Adrenal gland (tissue), 19 donors: ENCODE measurements at regions of chr18 and their contacts with region 1.

Region 1: GRCh38 chr18:32552421-32553030 is 81.8 kb upstream of the GAREM1 start:
- DNase-seq: peak; percentile 60 to 82 (median 73)
- H3K4me3 ChIP-seq: no peak overlapping the region
- H3K27ac ChIP-seq: no peak overlapping the region
- H3K4me1 ChIP-seq: no peaks in the 10 kb centered on the region
- H3K27me3 ChIP-seq: no peaks in the 10 kb centered on the region
- CTCF ChIP-seq: peak; percentile 78 to 91 (median 83)
- POLR2A ChIP-seq: no peak

Region 2: DNA sequence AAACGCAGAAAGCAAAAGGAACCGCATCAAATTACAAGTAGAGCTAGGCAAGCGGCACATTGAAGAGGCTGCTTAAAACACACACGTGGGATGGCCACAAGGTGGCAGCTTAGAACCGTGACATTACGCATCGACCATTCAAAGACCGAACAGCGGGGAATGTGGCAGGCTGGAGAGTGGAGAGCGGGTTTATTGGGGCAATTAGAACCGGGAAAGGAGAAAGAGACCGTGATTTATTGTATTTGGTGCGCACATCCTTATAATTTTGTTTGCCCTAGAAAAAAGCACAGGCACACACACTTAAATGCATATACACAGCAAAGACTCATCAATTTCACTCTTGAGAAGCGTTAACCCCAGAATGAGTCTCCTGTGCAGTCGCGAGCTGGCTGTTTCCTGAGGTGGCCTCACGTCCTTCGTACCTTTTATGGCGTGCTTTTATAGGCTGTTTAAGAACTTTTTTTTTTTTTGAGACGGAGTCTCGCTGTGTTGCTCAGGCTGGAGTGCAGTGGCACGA is 394.4 kb before region 1 on chr18:
- intact Hi-C with region 1: loop called (anchors 2 to 5 kb)
- DNase-seq: peak; percentile 79 to 92 (median 86)
- H3K4me3 ChIP-seq: no peak overlapping the region
- H3K27ac ChIP-seq: no peak overlapping the region
- H3K4me1 ChIP-seq: peaks cover 0 to 7% of the 10 kb centered on the region in 2 donors
- H3K27me3 ChIP-seq: no peaks in the 10 kb centered on the region
- CTCF ChIP-seq: peak; percentile 71 to 96 (median 90)
- POLR2A ChIP-seq: no peak

Region 3: GRCh38 chr18:32261003-32261402 is 291.5 kb before region 1 on chr18:
- intact Hi-C with region 1: loop called (anchors 5 to 10 kb)
- DNase-seq: no peak
- H3K4me3 ChIP-seq: no peak overlapping the region
- H3K27ac ChIP-seq: no peak overlapping the region
- H3K4me1 ChIP-seq: no peaks in the 10 kb centered on the region
- H3K27me3 ChIP-seq: no peaks in the 10 kb centered on the region
- CTCF ChIP-seq: no peak
- POLR2A ChIP-seq: no peak

Region 4: GRCh38 chr18:32271672-32272208 is 280.8 kb before region 1 on chr18:
- intact Hi-C with region 1: loop called (anchors 5 to 10 kb)
- DNase-seq: peak in 4 of 7 donors; percentile 15 to 48 (median 36)
- H3K4me3 ChIP-seq: no peak overlapping the region
- H3K27ac ChIP-seq: no peak overlapping the region
- H3K4me1 ChIP-seq: no peaks in the 10 kb centered on the region
- H3K27me3 ChIP-seq: no peaks in the 10 kb centered on the region
- CTCF ChIP-seq: peak; percentile 53 to 80 (median 70)
- POLR2A ChIP-seq: no peak

Region 5: DNA sequence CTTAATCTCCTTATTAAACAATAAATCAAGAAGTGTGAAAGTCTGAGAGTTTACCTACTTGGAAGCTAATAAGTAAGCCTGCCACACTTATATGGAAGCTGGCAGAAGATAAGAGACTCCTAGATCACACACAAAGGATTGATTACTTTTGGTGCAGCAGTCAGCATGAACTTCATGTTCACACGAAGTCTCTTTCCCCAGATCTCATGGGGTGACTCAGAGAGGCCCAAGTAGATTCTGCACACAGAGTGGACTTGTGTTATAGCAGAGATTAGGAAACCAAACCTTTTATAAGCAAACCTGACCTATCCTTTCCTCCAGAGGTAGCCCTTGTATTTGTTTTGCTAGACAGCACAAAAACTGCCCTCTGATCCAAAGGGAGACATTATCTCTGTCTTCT is 71.9 kb before region 1 on chr18:
- intact Hi-C with region 1: loop called in 1 of 2 experiments (anchors 10 kb)
- DNase-seq: no peak
- H3K4me3 ChIP-seq: no peak overlapping the region
- H3K27ac ChIP-seq: no peak overlapping the region
- H3K4me1 ChIP-seq: no peaks in the 10 kb centered on the region
- H3K27me3 ChIP-seq: no peaks in the 10 kb centered on the region
- CTCF ChIP-seq: no peak
- POLR2A ChIP-seq: no peak

Region 6: DNA sequence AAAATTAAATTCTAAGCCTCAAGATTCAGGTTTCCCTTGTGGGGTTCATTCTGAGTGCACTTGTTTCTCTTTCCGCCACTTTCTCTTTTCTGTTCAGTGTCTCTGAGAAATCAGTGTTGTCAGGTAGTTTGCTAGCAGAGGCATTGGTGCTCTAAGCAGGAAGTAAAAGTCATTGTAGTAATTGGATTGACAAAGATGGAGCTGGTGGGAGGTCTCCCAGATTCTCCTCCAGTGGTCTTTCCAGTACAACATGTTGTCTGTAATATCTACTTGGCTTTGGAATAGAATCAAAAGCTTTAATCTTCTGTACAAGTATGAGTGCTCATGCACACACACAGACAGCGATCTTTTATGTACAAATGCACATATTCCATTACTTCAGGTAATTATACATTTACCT is 84.7 kb after region 1 on chr18:
- intact Hi-C with region 1: no loop called
- DNase-seq: no peak
- H3K4me3 ChIP-seq: no peak overlapping the region
- H3K27ac ChIP-seq: no peak overlapping the region
- H3K4me1 ChIP-seq: no peaks in the 10 kb centered on the region
- H3K27me3 ChIP-seq: no peaks in the 10 kb centered on the region
- CTCF ChIP-seq: no peak
- POLR2A ChIP-seq: no peak

Region 7: GRCh38 chr18:32851936-32852335 is 299.4 kb after region 1 on chr18:
- intact Hi-C with region 1: no loop called
- DNase-seq: no peak
- H3K4me3 ChIP-seq: no peak overlapping the region
- H3K27ac ChIP-seq: no peak overlapping the region
- H3K4me1 ChIP-seq: no peaks in the 10 kb centered on the region
- H3K27me3 ChIP-seq: no peaks in the 10 kb centered on the region
- CTCF ChIP-seq: no peak
- POLR2A ChIP-seq: no peak